Spleen (tissue), 13 donors: ENCODE measurements at regions of chr16 and their contacts with region 1.

Region 1: DNA sequence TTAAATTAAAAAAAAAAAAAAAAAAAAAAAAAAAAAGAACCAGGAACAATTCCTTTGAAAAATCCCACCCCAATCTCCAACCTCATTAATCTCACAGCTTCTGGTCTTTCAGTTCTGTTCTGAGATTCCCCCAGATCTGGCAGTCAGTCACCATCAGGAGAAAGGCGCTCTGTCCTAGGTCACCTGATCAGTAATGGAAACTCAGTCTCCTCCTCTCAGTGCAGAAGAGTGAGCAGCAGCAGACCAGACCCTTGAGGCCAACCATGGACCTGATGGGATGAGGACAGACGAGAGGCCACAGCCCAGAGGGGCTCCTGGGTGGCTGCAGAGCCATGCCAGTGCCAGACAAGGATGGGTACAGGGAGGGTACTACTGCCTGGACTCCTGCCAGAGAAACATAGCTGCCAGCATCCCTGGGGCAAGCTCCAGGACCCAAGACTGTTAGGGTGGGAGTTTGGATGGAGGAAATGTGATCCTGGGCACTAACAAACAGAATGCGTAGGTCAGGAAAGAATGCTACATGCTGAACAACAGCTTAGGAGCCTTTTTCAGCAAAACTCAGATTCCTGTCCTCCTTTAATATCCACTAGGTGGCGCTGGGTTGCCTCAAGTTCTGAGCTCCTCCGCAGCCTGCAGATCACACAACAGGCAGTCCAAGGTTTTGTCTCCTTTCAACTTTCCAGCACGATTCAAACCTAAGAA is 28.7 kb downstream of the MPG start:
- DNase-seq: no peak
- H3K4me3 ChIP-seq: no peak overlapping the region
- H3K27ac ChIP-seq: peak overlapping the region in 1 of 8 donors; percentile 8
- H3K4me1 ChIP-seq: peaks cover 0 to 19% (median 4%) of the 10 kb centered on the region in 6 donors
- H3K27me3 ChIP-seq: no peaks in the 10 kb centered on the region
- CTCF ChIP-seq: peak; percentile 63 to 85 (median 74)
- POLR2A ChIP-seq: no peak

Region 2: GRCh38 chr16:154223-155030 is 47.7 kb after region 1 on chr16:
- intact Hi-C with region 1: no loop called
- DNase-seq: no peak
- H3K4me3 ChIP-seq: peak overlapping the region; percentile 6 to 67 (median 36)
- H3K27ac ChIP-seq: peak overlapping the region in 1 of 8 donors; percentile 14
- H3K4me1 ChIP-seq: peaks cover 6 to 12% (median 10%) of the 10 kb centered on the region in 6 donors
- H3K27me3 ChIP-seq: peaks cover 0 to 60% (median 21%) of the 10 kb centered on the region in 7 donors
- CTCF ChIP-seq: no peak
- POLR2A ChIP-seq: no peak

Region 3: DNA sequence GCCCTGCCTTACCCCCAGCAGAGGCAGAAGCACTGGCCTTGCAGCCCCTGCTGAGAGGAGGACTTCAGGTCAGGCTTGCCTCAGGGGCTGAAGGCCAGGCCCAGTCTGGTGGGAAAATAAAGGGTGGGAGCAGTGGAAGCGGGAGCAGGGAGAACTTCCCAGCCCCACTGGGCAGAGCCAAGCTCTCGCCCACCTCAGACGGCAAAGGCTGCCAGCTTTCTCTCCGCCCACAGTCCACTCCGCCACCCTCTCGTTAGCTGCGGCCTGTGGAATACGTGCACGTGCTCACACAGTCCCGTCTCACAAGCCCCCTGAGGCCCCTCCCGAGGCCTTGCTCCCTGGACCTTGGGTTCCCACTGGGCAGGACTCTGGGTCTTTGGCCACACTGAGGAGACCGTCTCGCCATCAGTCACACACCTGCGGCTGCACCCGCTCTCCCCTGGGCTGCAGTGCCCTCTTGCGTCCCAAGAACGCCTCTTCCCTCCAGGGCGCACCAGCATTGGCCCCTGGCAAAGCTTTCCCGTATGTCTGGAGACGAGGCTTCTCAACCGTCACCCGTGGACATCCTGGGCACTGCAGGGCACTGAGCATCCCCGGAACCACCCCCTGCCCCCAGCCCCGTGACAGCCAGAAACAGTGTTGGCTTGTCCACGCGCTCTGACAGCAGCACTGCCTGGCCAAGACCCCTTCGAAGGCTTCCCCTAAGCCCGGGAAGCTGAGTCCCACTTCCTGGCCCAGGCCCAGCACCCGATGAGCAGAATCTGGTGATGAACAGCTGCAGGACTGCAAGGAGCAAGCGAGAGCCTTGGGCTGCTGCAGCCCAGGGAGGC is 255.3 kb after region 1 on chr16:
- intact Hi-C with region 1: loop called (anchors 5 kb)
- DNase-seq: peak; percentile 92
- H3K4me3 ChIP-seq: no peak overlapping the region
- H3K27ac ChIP-seq: no peak overlapping the region
- H3K4me1 ChIP-seq: peaks cover 0 to 11% (median 3%) of the 10 kb centered on the region in 6 donors
- H3K27me3 ChIP-seq: peaks cover 0 to 28% (median 4%) of the 10 kb centered on the region in 7 donors
- CTCF ChIP-seq: peak; percentile 71 to 94 (median 82)
- POLR2A ChIP-seq: no peak